IMR-90 (cell line): ENCODE measurements at regions of chr2 and their contacts with region 1.

Region 1: DNA sequence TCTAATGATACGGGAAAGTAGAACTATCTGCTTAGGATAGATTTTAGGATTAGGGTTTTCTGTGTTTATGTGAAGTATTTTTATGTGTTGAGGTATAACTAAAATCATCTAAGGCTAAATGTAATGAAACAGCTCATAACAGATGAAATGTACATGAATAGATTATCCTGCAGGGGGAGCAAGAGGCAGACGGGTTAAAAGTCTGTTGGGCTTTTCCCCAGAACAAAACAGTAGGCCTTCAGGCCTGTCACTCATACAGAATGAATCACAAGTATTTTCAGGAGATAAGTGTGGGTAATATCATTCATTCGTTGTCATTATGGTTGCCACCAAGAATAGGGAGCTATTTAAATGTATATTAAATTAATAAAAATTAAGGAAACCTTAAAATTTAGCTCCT is 107.9 kb upstream of the IL1R2 start:
- DNase-seq: peak; percentile 59
- ATAC-seq: peak; percentile 80
- H3K4me3 ChIP-seq: no peak overlapping the region
- H3K27ac ChIP-seq: no peak overlapping the region
- H3K4me1 ChIP-seq: 0 out of 2 replicates have a peak, but pooled peaks cover 3% of the 10 kb centered on the region
- H3K27me3 ChIP-seq: no peaks in the 10 kb centered on the region
- CTCF ChIP-seq: peak; percentile 65
- POLR2A ChIP-seq: no peak
- RAD21 ChIP-seq: peak; percentile 57

Region 2: GRCh38 chr2:101983928-101984327 is 100.1 kb after region 1 on chr2:
- CTCF ChIA-PET with region 1: no interaction called
- POLR2A ChIA-PET with region 1: no interaction called
- dilution Hi-C with region 1: no loop called
- in situ Hi-C with region 1: no loop called
- intact Hi-C with region 1: loop called (anchors 2 kb)
- DNase-seq: no peak
- ATAC-seq: peak; percentile 55
- H3K4me3 ChIP-seq: no peak overlapping the region
- H3K27ac ChIP-seq: no peak overlapping the region
- H3K4me1 ChIP-seq: no peaks in the 10 kb centered on the region
- H3K27me3 ChIP-seq: peaks cover 20% of the 10 kb centered on the region
- CTCF ChIP-seq: peak; percentile 39
- POLR2A ChIP-seq: no peak
- RAD21 ChIP-seq: peak; percentile 36

Region 3: DNA sequence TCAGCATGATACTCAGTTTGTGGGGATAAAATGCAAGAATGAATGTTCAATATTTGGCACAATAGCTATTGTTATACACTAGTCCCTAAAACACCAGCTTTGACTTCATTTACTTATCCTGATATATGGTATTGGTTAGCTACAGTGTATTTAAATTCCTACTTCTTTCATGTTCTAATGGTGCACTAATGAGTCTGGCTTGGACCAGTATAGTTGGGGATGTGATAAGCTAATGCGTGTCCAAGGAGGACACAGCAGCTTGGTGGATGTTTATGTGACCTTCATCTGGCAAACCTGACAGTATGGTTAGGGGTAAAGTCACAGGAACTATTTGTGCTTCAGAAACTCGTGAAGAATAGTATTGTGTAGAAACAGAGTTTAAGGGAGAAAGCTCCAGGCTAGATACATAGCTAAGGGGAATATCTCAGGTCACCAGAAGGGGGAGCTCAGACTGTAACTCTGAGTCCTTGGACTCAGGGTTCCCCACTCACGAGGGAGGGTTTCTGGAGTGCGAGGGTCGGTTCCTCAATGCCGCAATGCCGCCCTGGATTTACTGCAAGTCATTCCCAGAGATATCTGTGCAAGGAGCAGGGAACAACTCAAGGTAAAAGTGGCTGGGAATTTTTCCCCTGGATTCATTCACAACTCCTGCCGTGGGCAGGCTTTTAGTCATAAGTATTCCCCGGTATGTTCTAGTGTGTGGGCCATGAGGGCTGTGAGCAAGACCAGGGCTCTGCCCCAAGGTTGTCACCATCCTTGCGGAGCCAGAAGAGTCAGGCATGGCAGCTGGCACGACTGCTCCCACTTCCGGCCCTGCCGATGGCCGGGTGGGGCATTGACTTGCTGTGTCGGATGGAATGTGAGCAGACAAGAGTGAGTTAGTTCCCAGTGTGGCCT is 122.4 kb after region 1 on chr2:
- CTCF ChIA-PET with region 1: interaction called, 9 read pairs
- POLR2A ChIA-PET with region 1: no interaction called
- dilution Hi-C with region 1: no loop called
- in situ Hi-C with region 1: no loop called
- intact Hi-C with region 1: loop called (anchors 5 kb)
- DNase-seq: peak; percentile 56
- ATAC-seq: peak; percentile 97
- H3K4me3 ChIP-seq: no peak overlapping the region
- H3K27ac ChIP-seq: no peak overlapping the region
- H3K4me1 ChIP-seq: no peaks in the 10 kb centered on the region
- H3K27me3 ChIP-seq: peaks cover 5% of the 10 kb centered on the region; the same call in 1 of the 2 replicates
- CTCF ChIP-seq: peak; percentile 68
- POLR2A ChIP-seq: no peak
- RAD21 ChIP-seq: peak; percentile 73

Region 4: DNA sequence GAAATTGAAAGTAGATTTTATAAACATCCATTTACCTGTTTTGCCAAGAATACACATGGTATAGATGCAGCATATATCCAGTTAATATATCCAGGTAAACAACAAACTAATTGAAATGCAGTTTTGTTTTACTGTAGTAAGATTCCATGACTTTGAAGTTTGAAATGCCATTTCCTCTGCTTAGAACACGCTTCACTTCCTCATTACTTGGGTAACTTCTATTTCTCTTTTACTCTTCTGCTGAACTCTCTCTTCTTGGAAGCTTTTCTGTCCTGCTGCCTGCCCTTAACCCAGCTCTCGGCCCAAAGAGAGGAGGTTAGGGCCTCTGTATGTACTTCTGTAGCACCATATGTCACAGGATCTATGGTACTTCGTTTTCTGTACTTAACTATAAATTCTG is 288.9 kb after region 1 on chr2:
- CTCF ChIA-PET with region 1: no interaction called
- POLR2A ChIA-PET with region 1: no interaction called
- dilution Hi-C with region 1: no loop called
- in situ Hi-C with region 1: loop called (anchors 10 kb)
- intact Hi-C with region 1: no loop called
- DNase-seq: no peak
- ATAC-seq: no peak
- H3K4me3 ChIP-seq: no peak overlapping the region
- H3K27ac ChIP-seq: no peak overlapping the region
- H3K4me1 ChIP-seq: no peaks in the 10 kb centered on the region
- H3K27me3 ChIP-seq: no peaks in the 10 kb centered on the region
- CTCF ChIP-seq: no peak
- POLR2A ChIP-seq: no peak
- RAD21 ChIP-seq: no peak

Region 5: GRCh38 chr2:102355526-102356380 is 471.9 kb after region 1 on chr2 and contains the start of gene IL18R1:
- CTCF ChIA-PET with region 1: no interaction called
- POLR2A ChIA-PET with region 1: no interaction called
- dilution Hi-C with region 1: no loop called
- in situ Hi-C with region 1: no loop called
- intact Hi-C with region 1: loop called (anchors 10 kb)
- DNase-seq: peak; percentile 69
- ATAC-seq: peak; percentile 100
- H3K4me3 ChIP-seq: peak within 1 kb of the TSS; percentile 83
- H3K27ac ChIP-seq: peak within 1 kb of the TSS; percentile 65; the same call in 1 of the 2 replicates
- H3K4me1 ChIP-seq: peaks cover 2% of the 10 kb centered on the region; the same call in 1 of the 2 replicates
- H3K27me3 ChIP-seq: 0 out of 2 replicates have a peak, but pooled peaks cover 2% of the 10 kb centered on the region
- CTCF ChIP-seq: peak; percentile 90
- POLR2A ChIP-seq: no peak; the same call in 1 of the 2 replicates
- RAD21 ChIP-seq: peak; percentile 88
- total RNA-seq, gene IL18R1: 0.18 and 0.28 TPM in 2 replicates

Region 6: GRCh38 chr2:102442967-102443828 is 559.3 kb after region 1 on chr2:
- CTCF ChIA-PET with region 1: interaction called, 3 read pairs
- POLR2A ChIA-PET with region 1: no interaction called
- dilution Hi-C with region 1: no loop called
- in situ Hi-C with region 1: loop called (anchors 10 kb)
- intact Hi-C with region 1: loop called (anchors 2 kb)
- DNase-seq: peak; percentile 39
- ATAC-seq: peak; percentile 83
- H3K4me3 ChIP-seq: no peak overlapping the region
- H3K27ac ChIP-seq: no peak overlapping the region
- H3K4me1 ChIP-seq: 0 out of 2 replicates have a peak, but pooled peaks cover 2% of the 10 kb centered on the region
- H3K27me3 ChIP-seq: peaks cover 3% of the 10 kb centered on the region; the same call in 1 of the 2 replicates
- CTCF ChIP-seq: peak; percentile 77
- POLR2A ChIP-seq: no peak
- RAD21 ChIP-seq: peak; percentile 78